Panc1 (cell line): ENCODE measurements at regions of chr16 and their contacts with region 1.

Region 1: GRCh38 chr16:62102588-62102987 is 66.3 kb upstream of the CDH8 start:
- DNase-seq: no peak
- ATAC-seq: no peak
- H3K4me3 ChIP-seq: no peak overlapping the region
- H3K27ac ChIP-seq: no peak overlapping the region
- H3K4me1 ChIP-seq: no peaks in the 10 kb centered on the region
- H3K27me3 ChIP-seq: no peaks in the 10 kb centered on the region
- CTCF ChIP-seq: no peak

Region 2: GRCh38 chr16:62475573-62475972 is 373.0 kb after region 1 on chr16:
- CTCF ChIA-PET with region 1: no interaction called
- POLR2A ChIA-PET with region 1: no interaction called
- in situ Hi-C with region 1: loop called (anchors 5 kb)
- intact Hi-C with region 1: no loop called
- DNase-seq: no peak
- ATAC-seq: no peak
- H3K4me3 ChIP-seq: no peak overlapping the region
- H3K27ac ChIP-seq: no peak overlapping the region
- H3K4me1 ChIP-seq: no peaks in the 10 kb centered on the region
- H3K27me3 ChIP-seq: no peaks in the 10 kb centered on the region
- CTCF ChIP-seq: no peak